ENCODE measurements at regions of chr4 and their contacts with region 1.

Region 1: GRCh38 chr4:92528541-92528940 is 224.8 kb downstream of the GRID2 start:
- DNase-seq: no peak
- H3K4me3 Mint-ChIP-seq: no peak overlapping the region
- H3K27ac Mint-ChIP-seq: no peak overlapping the region
- H3K4me1 Mint-ChIP-seq: no peaks in the 10 kb centered on the region
- H3K27me3 Mint-ChIP-seq: no peaks in the 10 kb centered on the region
- CTCF ChIP-seq: no peak

Region 2: DNA sequence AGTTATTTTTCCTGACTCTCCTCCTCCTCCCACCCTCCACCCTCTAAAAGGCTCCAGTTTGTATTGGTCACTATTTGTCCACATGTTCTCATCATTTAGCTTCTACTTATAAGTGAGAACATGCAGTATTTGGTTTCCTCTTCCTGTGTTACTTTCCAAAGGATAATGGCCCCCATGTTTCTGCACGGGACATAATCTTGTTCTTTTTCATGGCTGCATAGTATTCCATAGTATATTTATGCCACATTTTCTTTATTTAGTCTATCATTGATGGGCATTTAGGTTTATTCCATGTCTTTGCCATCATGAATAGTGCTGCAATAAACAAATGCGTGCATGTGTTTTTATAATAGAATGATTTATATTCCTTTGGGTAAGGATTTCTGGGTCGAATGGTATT is 392.1 kb before region 1 on chr4:
- CTCF ChIA-PET with region 1: interaction called, 11 read pairs
- intact Hi-C with region 1: no loop called
- DNase-seq: no peak
- H3K4me3 Mint-ChIP-seq: no peak overlapping the region
- H3K27ac Mint-ChIP-seq: no peak overlapping the region
- H3K4me1 Mint-ChIP-seq: no peaks in the 10 kb centered on the region
- H3K27me3 Mint-ChIP-seq: no peaks in the 10 kb centered on the region
- CTCF ChIP-seq: no peak